Left ventricle myocardium inferior (tissue), 1 donor: ENCODE measurements at regions of chr1 and their contacts with region 1.

Region 1: DNA sequence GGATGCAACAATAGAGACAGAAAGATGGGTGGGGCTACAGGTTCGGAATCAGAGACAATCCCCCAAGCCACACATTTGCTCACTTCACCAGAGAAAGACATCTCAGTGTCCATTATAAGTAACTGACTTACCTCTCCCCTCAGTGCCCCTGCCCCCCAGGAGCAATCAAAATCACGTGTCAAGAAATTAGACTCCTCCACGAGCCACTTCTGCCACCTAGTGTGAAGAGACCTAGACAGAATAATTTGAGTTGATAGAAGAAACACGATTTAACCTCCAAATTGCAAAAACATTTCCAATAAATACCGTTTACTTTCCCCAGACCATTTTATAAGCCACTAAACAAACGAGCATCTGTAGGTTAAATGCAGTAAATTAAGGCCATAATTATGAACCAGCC is 123.2 kb downstream of the SLC30A10 start:
- DNase-seq: no peak
- H3K4me3 ChIP-seq: no peak overlapping the region
- H3K27ac ChIP-seq: no peak overlapping the region
- H3K4me1 ChIP-seq: no peaks in the 10 kb centered on the region
- H3K27me3 ChIP-seq: no peaks in the 10 kb centered on the region
- CTCF ChIP-seq: peak; percentile 53

Region 2: GRCh38 chr1:219744652-219745469 is 60.3 kb before region 1 on chr1:
- intact Hi-C with region 1: loop called (anchors 10 kb)
- DNase-seq: no peak
- H3K4me3 ChIP-seq: no peak overlapping the region
- H3K27ac ChIP-seq: no peak overlapping the region
- H3K4me1 ChIP-seq: peaks cover 29% of the 10 kb centered on the region
- H3K27me3 ChIP-seq: no peaks in the 10 kb centered on the region
- CTCF ChIP-seq: no peak